ENCODE measurements at regions of chr3 and their contacts with region 1.

Region 1: DNA sequence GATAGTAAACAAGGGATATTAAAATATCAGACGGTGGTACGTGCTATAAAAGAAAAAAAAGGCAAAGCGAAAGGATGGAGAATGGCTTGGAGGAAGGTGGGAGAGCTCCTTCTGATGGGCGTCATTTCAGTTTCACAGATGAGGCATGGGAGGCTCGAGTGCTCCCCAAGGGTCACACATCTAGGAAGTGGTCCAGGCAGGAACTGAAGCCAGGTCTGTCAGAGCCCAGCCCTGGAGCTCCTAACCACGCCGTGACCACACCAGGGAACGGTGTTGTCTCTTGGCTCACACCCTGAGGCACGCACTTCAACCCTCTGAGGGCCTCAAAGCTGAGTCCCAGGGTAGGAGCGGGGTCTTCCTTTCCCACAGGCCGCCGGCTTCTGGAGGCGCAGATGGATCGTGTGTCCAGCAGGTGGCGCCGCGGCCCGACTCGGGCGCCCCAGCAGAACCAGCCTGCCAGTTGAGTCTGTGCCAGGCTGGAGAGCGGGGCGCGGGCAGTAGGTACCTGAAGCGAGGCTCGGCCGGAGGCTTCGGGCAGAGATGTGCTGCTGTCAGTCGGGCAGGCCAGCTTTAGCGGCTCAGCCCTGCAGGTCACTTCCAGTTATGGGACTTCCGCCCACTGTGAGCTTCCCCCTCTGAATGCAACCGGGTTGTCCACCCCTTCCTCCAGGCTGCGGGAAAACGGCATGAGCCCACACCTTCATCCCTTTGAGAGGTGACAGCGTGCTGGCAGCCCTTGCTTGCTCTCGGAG is 68.1 kb downstream of the SLC6A1 start:
- H3K4me3 ChIP-seq: no peak overlapping the region
- H3K27ac ChIP-seq: no peak overlapping the region
- H3K4me1 ChIP-seq: no peaks in the 10 kb centered on the region
- CTCF ChIP-seq: peak; percentile 87

Region 2: GRCh38 chr3:10772271-10773161 is 288.2 kb before region 1 on chr3:
- CTCF ChIA-PET with region 1: interaction called, 15 read pairs
- POLR2A ChIA-PET with region 1: no interaction called
- H3K4me3 ChIP-seq: no peak overlapping the region
- H3K27ac ChIP-seq: no peak overlapping the region
- H3K4me1 ChIP-seq: no peaks in the 10 kb centered on the region
- CTCF ChIP-seq: peak; percentile 54

Region 3: DNA sequence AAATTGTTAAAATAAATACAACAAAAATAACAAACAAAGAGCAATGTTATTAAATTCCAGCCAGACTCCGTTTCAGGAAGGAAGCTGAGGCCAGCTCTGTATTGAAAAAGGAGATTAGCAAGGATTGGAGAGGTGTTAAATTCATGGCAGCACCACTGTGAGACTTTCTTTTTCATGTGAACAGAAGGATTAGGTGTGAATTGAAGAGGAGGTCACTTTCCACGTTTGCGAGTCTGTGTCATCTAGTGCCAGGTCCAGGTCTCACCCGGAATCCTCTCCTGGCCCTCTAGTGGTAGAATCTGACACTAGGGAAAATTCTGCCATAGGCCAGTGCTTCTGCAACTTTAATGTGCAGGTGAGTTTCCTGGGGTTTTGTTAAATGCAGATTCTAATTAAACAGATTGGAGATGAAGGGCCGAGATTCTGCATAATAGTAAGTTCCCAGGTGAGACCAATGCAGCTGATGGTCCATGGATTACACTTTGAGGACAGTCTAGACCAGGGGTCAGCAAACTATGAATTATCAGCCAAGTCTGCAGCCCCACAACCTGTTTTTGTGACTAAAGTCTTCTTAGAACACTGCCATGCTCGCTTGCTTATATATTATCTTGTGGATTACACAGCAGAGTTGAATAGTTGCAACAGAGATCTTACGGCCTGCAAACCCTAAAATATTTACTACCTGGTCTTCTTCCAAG is 77.3 kb before region 1 on chr3:
- CTCF ChIA-PET with region 1: interaction called, 11 read pairs
- POLR2A ChIA-PET with region 1: no interaction called
- H3K4me3 ChIP-seq: no peak overlapping the region
- H3K27ac ChIP-seq: no peak overlapping the region
- H3K4me1 ChIP-seq: peaks cover 2% of the 10 kb centered on the region; the same call in 1 of the 2 replicates
- CTCF ChIP-seq: peak; percentile 67; the same call in 1 of the 2 replicates

Region 4: GRCh38 chr3:11096266-11097135 is 35.8 kb after region 1 on chr3:
- CTCF ChIA-PET with region 1: interaction called, 26 read pairs
- POLR2A ChIA-PET with region 1: no interaction called
- H3K4me3 ChIP-seq: peak overlapping the region; percentile 32
- H3K27ac ChIP-seq: no peak overlapping the region; the same call in 1 of the 2 replicates
- H3K4me1 ChIP-seq: 0 out of 2 replicates have a peak, but pooled peaks cover 2% of the 10 kb centered on the region
- CTCF ChIP-seq: no peak

Region 5: DNA sequence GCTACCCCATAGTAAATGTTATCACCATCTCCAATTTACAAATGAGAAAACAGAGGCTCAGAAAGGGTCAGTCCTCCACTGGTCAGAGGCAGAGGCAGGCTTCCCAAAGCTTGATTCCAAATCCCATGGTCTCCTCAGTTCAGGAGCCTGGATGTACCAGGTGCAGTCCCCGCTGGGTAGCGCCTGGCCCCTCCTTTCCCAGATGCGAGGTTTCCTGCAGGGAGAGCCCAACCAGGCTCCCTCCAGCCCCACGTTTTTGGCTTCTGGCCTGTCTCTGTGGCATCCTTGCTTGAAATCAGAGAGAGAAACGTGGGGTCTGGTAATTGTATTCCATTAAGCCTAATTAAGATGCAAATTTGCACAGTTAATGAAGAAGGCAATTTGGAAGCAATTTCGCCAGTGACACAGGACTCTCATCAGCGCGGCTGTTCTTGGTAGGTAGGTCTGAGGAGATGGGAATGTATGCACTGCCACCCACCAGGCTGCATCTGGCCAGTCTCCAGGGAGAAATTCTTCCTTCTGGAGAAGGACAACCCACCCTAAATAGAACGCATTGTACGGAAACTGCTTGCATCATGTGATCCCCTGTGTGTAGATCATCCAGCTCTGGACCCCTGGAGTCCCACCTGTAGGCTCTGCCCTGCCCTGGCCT is 144.1 kb after region 1 on chr3:
- CTCF ChIA-PET with region 1: interaction called, 26 read pairs
- POLR2A ChIA-PET with region 1: no interaction called
- H3K4me3 ChIP-seq: no peak overlapping the region
- H3K27ac ChIP-seq: no peak overlapping the region
- H3K4me1 ChIP-seq: no peaks in the 10 kb centered on the region
- CTCF ChIP-seq: no peak

Region 6: DNA sequence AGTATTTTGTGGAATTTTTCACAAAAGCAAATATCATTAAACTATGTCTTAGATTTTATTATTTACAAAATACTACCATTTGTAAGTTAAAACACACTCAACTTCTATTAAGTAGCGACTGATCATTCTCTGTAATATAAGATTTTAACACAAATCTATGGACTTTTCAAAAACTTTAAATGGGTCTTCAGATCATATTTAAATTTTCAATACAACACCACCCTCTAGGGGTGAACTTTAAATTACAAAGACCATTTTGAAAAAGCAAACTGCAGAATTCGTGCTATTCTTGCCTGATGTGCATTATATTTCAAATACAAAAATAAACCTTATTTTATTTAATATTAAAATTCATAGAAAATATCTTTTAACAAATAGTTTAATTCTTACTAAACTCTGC is 591.2 kb after region 1 on chr3:
- CTCF ChIA-PET with region 1: interaction called, 16 read pairs
- POLR2A ChIA-PET with region 1: no interaction called
- H3K4me3 ChIP-seq: no peak overlapping the region
- H3K27ac ChIP-seq: no peak overlapping the region
- H3K4me1 ChIP-seq: peaks cover 3% of the 10 kb centered on the region; the same call in 1 of the 2 replicates
- CTCF ChIP-seq: no peak